Ovary (tissue), 10 donors: ENCODE measurements at regions of chr19 and their contacts with region 1.

Region 1: GRCh38 chr19:39969681-39970424 is 1.1 kb upstream of the PSMC4 start:
- DNase-seq: no peak
- H3K4me3 ChIP-seq: peak overlapping the region; percentile 82
- H3K27ac ChIP-seq: peak overlapping the region; percentile 35 to 76
- H3K4me1 ChIP-seq: peaks cover 4% of the 10 kb centered on the region
- H3K27me3 ChIP-seq: no peaks in the 10 kb centered on the region
- CTCF ChIP-seq: no peak
- EP300 ChIP-seq: no peak
- POLR2A ChIP-seq: no peak

Region 2: DNA sequence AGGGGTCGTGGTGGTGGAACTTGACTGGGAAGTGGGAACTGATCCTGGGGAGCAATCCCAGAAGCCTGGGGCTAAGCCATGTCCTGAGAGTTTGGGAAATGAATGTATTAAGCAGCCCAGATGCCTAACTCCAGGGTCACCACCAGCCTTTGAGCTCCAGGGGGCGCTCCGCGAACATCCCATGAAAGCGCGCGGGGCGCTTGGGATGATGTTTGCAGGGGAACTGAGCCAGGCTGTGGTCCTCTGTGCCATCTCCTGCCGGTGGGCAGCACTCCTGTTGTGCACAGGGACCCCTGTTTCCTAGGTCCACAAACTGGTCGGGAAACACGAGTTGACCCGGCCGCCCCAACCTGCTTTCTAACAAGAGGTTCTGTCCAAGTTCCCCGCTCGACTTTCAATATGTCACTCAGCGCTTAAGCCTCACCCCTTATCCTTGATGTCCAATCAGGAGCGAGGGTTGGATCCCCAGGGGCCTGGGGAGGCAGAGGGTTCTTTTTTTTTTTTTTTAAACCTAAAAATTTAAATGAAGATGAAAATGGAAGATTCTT is 176.8 kb before region 1 on chr19:
- intact Hi-C with region 1: loop called in 1 of 4 experiments (anchors 10 kb)
- DNase-seq: peak; percentile 45 to 81 (median 66)
- H3K4me3 ChIP-seq: peak overlapping the region; percentile 33
- H3K27ac ChIP-seq: no peak overlapping the region
- H3K4me1 ChIP-seq: no peaks in the 10 kb centered on the region
- H3K27me3 ChIP-seq: no peaks in the 10 kb centered on the region
- CTCF ChIP-seq: peak; percentile 41 to 70 (median 50)
- EP300 ChIP-seq: no peak
- POLR2A ChIP-seq: no peak

Region 3: DNA sequence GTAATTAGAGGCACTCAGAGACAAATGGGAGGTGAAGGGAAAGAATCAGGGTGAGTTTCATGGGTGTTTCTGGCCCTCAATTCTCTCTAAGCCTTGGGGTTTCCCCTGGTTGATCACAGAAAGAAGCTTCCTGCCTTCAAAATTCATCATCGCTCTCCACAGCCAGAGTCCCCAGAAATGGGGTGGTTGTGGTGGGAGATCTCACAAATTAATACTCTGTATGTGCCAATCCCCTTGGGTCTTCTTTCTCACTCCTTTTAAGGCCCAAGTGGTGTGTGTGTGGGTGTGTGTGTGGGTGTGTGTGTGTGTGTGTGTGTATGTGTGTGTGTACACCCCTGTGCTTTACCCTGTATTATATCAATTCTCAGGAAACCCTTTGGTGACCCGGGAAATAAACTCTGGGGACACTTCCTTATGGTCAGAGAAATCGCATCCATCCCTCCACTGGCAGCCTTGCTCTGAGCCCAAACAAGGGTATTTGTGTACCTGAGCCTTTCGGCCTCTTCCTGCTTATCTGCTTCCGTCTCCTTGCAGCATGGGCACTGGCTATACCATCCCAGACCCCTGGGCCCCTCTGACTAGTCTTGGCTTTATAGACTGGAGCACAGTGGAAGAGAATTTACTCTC is 32.6 kb before region 1 on chr19:
- intact Hi-C with region 1: no loop called
- DNase-seq: no peak
- H3K4me3 ChIP-seq: no peak overlapping the region
- H3K27ac ChIP-seq: no peak overlapping the region
- H3K4me1 ChIP-seq: no peaks in the 10 kb centered on the region
- H3K27me3 ChIP-seq: no peaks in the 10 kb centered on the region
- CTCF ChIP-seq: no peak
- EP300 ChIP-seq: no peak
- POLR2A ChIP-seq: no peak